Sigmoid colon (tissue), 7 donors: ENCODE measurements at regions of chr4 and their contacts with region 1.

Region 1: DNA sequence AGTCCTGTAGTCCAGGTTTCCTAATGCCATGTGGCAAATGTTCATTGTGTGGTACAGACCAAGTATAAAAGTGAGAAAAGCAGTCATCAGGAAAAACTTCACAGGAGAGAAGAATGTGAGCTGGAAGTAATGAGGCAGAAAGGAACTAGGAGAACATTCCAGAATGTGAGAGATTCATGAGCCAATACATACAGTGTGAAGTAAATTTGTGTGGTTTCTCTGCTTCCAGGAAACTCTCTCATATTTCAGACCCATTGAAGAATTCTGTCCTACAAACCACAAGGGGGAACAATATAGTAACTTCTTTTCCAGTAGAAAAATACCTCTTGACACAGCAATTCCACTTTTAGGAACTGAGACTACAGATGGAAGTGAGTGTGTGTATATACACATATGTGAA is 136.5 kb downstream of the RNF150 start:
- DNase-seq: no peak
- H3K4me3 ChIP-seq: no peak overlapping the region
- H3K27ac ChIP-seq: peak overlapping the region; percentile 59 to 77 (median 74)
- H3K4me1 ChIP-seq: peaks cover 0 to 79% (median 57%) of the 10 kb centered on the region in 4 donors
- H3K27me3 ChIP-seq: no peaks in the 10 kb centered on the region
- CTCF ChIP-seq: peak in 1 of 4 experiments; percentile 17
- EP300 ChIP-seq: no peak
- POLR2A ChIP-seq: no peak

Region 2: GRCh38 chr4:140943486-140944198 is 53.1 kb before region 1 on chr4:
- intact Hi-C with region 1: loop called (anchors 5 kb)
- DNase-seq: no peak
- H3K4me3 ChIP-seq: no peak overlapping the region
- H3K27ac ChIP-seq: peak overlapping the region; percentile 51 to 80 (median 71)
- H3K4me1 ChIP-seq: peaks cover 0 to 77% (median 66%) of the 10 kb centered on the region in 4 donors
- H3K27me3 ChIP-seq: no peaks in the 10 kb centered on the region
- CTCF ChIP-seq: no peak
- EP300 ChIP-seq: no peak
- POLR2A ChIP-seq: no peak